ENCODE measurements at regions of chr13 and their contacts with region 1.

Region 1: GRCh38 chr13:46975173-46975572 is 78.3 kb upstream of the HTR2A start:
- DNase-seq: no peak
- H3K4me3 Mint-ChIP-seq: no peak overlapping the region
- H3K27ac Mint-ChIP-seq: no peak overlapping the region
- H3K4me1 Mint-ChIP-seq: peaks cover 7% of the 10 kb centered on the region
- H3K27me3 Mint-ChIP-seq: no peaks in the 10 kb centered on the region
- CTCF ChIP-seq: no peak

Region 2: DNA sequence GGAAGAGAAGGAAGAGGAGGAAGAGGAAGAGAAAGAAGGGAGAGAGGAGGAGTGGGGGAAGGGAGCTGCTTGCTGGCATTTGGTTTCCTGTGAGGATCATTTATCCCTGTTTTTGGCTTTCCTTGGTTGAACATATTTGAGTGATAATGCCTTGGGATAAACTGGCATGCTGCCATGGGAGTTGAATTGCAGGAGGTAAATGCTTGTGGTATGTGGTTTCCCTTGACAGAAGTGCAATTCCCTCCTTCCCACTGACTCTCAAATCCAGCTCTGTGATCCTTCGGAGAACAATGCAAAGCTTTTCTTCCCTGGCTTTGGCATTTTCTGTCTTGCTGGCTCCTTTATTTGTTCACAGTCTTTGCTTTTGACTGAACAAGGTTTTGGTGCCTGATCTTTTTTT is 1300.3 kb before region 1 on chr13:
- CTCF ChIA-PET with region 1: no interaction called
- POLR2A ChIA-PET with region 1: no interaction called
- intact Hi-C with region 1: no loop called
- DNase-seq: peak; percentile 92
- H3K4me3 Mint-ChIP-seq: no peak overlapping the region
- H3K27ac Mint-ChIP-seq: no peak overlapping the region
- H3K4me1 Mint-ChIP-seq: peaks cover 6% of the 10 kb centered on the region
- H3K27me3 Mint-ChIP-seq: no peaks in the 10 kb centered on the region
- CTCF ChIP-seq: no peak

Region 3: GRCh38 chr13:46961719-46962118 is 13.5 kb before region 1 on chr13:
- CTCF ChIA-PET with region 1: interaction called, 29 read pairs
- POLR2A ChIA-PET with region 1: interaction called, 6 read pairs
- intact Hi-C with region 1: no loop called
- DNase-seq: peak; percentile 83
- H3K4me3 Mint-ChIP-seq: no peak overlapping the region
- H3K27ac Mint-ChIP-seq: no peak overlapping the region
- H3K4me1 Mint-ChIP-seq: peaks cover 17% of the 10 kb centered on the region
- H3K27me3 Mint-ChIP-seq: no peaks in the 10 kb centered on the region
- CTCF ChIP-seq: no peak

Region 4: DNA sequence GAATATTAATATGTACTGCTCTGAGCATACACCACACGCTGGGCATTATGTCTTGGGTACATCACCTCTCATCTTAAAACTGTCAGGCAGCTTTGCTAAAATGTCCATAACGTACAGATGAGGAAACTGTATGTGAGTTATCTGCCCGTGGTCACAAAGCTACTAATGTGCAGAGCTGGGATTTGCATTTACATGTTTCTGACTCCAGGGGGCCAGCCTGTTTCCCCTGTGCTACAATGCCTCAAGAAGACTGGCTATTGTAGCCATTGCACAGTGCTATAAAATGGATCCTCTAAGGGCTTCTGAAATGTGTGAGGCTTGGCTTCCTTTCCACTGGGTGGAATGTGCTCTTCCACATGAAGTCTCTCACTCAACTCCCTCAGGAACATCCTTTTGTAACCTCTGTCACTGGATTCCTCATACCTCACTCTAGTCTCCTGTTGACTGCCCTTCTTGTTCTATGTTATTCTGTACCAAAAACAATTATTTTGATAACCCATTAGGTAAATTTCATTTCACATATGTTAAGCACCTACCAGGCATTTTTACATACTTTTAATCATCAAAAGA is 17.3 kb after region 1 on chr13:
- CTCF ChIA-PET with region 1: interaction called, 14 read pairs
- POLR2A ChIA-PET with region 1: no interaction called
- intact Hi-C with region 1: no loop called
- DNase-seq: peak; percentile 39
- H3K4me3 Mint-ChIP-seq: no peak overlapping the region
- H3K27ac Mint-ChIP-seq: no peak overlapping the region
- H3K4me1 Mint-ChIP-seq: no peaks in the 10 kb centered on the region
- H3K27me3 Mint-ChIP-seq: no peaks in the 10 kb centered on the region
- CTCF ChIP-seq: peak; percentile 29

Region 5: DNA sequence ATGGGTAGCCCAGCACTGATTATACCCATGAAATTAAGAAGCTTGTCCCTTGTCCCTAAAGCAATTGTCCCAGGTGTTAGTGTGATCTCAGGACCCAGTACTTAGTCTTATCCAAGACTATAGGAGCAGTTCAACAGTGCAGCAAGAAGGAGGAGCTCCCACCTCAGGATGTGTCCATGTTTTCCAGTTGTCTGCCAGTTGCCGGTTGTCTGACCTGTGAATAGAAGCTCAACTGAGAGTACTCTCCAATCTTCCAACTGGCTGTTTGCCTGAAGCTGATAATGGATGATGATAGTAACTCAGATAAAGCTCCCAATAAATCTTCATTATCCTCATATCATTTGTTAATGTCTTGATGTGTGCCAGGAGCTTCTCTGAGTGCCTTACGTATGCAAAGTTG is 28.9 kb after region 1 on chr13:
- CTCF ChIA-PET with region 1: interaction called, 10 read pairs
- POLR2A ChIA-PET with region 1: interaction called, 4 read pairs
- intact Hi-C with region 1: no loop called
- DNase-seq: peak; percentile 5
- H3K4me3 Mint-ChIP-seq: no peak overlapping the region
- H3K27ac Mint-ChIP-seq: no peak overlapping the region
- H3K4me1 Mint-ChIP-seq: no peaks in the 10 kb centered on the region
- H3K27me3 Mint-ChIP-seq: peaks cover 10% of the 10 kb centered on the region
- CTCF ChIP-seq: no peak

Region 6: GRCh38 chr13:47774671-47774994 is 799.5 kb after region 1 on chr13:
- CTCF ChIA-PET with region 1: interaction called, 9 read pairs
- POLR2A ChIA-PET with region 1: no interaction called
- intact Hi-C with region 1: loop called (anchors 1 kb)
- DNase-seq: no peak
- H3K4me3 Mint-ChIP-seq: no peak overlapping the region
- H3K27ac Mint-ChIP-seq: no peak overlapping the region
- H3K4me1 Mint-ChIP-seq: no peaks in the 10 kb centered on the region
- H3K27me3 Mint-ChIP-seq: no peaks in the 10 kb centered on the region
- CTCF ChIP-seq: no peak